Activated CD4-positive, alpha-beta memory T cell treated with anti-CD3 and anti-CD28 coated beads for 36 hours (primary cell): ENCODE measurements at regions of chr6 and their contacts with region 1.

Region 1: GRCh38 chr6:31827286-31828079 is at the start of gene HSPA1B:
- DNase-seq: peak; percentile 98
- H3K4me3 Mint-ChIP-seq: peak within 1 kb of the TSS; percentile 86
- H3K27ac Mint-ChIP-seq: peak within 1 kb of the TSS; percentile 98
- H3K4me1 Mint-ChIP-seq: peaks cover 43% of the 10 kb centered on the region
- H3K27me3 Mint-ChIP-seq: no peaks in the 10 kb centered on the region
- total RNA-seq, gene HSPA1B: 59.5 to 62.3 TPM

Region 2: GRCh38 chr6:31619805-31620585 is 207.5 kb before region 1 on chr6:
- CTCF ChIA-PET with region 1: no interaction called
- POLR2A ChIA-PET with region 1: no interaction called
- intact Hi-C with region 1: loop called (anchors 1 kb)
- DNase-seq: peak; percentile 98
- H3K4me3 Mint-ChIP-seq: peak overlapping the region; percentile 91
- H3K27ac Mint-ChIP-seq: peak overlapping the region; percentile 98
- H3K4me1 Mint-ChIP-seq: peaks cover 47% of the 10 kb centered on the region
- H3K27me3 Mint-ChIP-seq: no peaks in the 10 kb centered on the region

Region 3: GRCh38 chr6:31680840-31681671 is 146.4 kb before region 1 on chr6 and contains the start of gene LY6G5C:
- CTCF ChIA-PET with region 1: interaction called, 7 read pairs
- POLR2A ChIA-PET with region 1: no interaction called
- intact Hi-C with region 1: loop called (anchors 1 kb)
- DNase-seq: peak; percentile 82
- H3K4me3 Mint-ChIP-seq: peak within 1 kb of the TSS; percentile 76
- H3K27ac Mint-ChIP-seq: peak within 1 kb of the TSS; percentile 44
- H3K4me1 Mint-ChIP-seq: peaks cover 15% of the 10 kb centered on the region
- H3K27me3 Mint-ChIP-seq: no peaks in the 10 kb centered on the region
- total RNA-seq, gene LY6G5C: 1.4 to 1.8 TPM

Region 4: GRCh38 chr6:31752739-31753319 is 74.7 kb before region 1 on chr6:
- CTCF ChIA-PET with region 1: no interaction called
- POLR2A ChIA-PET with region 1: no interaction called
- intact Hi-C with region 1: no loop called
- DNase-seq: no peak
- H3K4me3 Mint-ChIP-seq: no peak overlapping the region
- H3K27ac Mint-ChIP-seq: no peak overlapping the region
- H3K4me1 Mint-ChIP-seq: no peaks in the 10 kb centered on the region
- H3K27me3 Mint-ChIP-seq: no peaks in the 10 kb centered on the region

Region 5: GRCh38 chr6:31769684-31770371 is 57.7 kb before region 1 on chr6:
- CTCF ChIA-PET with region 1: interaction called, 10 read pairs
- POLR2A ChIA-PET with region 1: no interaction called
- intact Hi-C with region 1: loop called (anchors 1 kb)
- DNase-seq: peak; percentile 90
- H3K4me3 Mint-ChIP-seq: no peak overlapping the region
- H3K27ac Mint-ChIP-seq: peak overlapping the region; percentile 25
- H3K4me1 Mint-ChIP-seq: peaks cover 21% of the 10 kb centered on the region
- H3K27me3 Mint-ChIP-seq: no peaks in the 10 kb centered on the region

Region 6: GRCh38 chr6:31795616-31796298 is 31.7 kb before region 1 on chr6 and contains the start of gene VARS1:
- CTCF ChIA-PET with region 1: interaction called, 9 read pairs
- POLR2A ChIA-PET with region 1: interaction called, 5 read pairs
- intact Hi-C with region 1: loop called (anchors 2 kb)
- DNase-seq: peak; percentile 91
- H3K4me3 Mint-ChIP-seq: peak within 1 kb of the TSS; percentile 98
- H3K27ac Mint-ChIP-seq: peak within 1 kb of the TSS; percentile 91
- H3K4me1 Mint-ChIP-seq: peaks cover 39% of the 10 kb centered on the region
- H3K27me3 Mint-ChIP-seq: no peaks in the 10 kb centered on the region
- total RNA-seq, gene VARS1: 141 to 153 TPM

Region 7: GRCh38 chr6:31815025-31815838 is 12.3 kb before region 1 on chr6 and contains the starts of genes HSPA1A and HSPA1L:
- CTCF ChIA-PET with region 1: interaction called, 11 read pairs
- POLR2A ChIA-PET with region 1: interaction called, 26 read pairs
- intact Hi-C with region 1: loop called (anchors 2 kb)
- DNase-seq: peak; percentile 82
- H3K4me3 Mint-ChIP-seq: peak within 1 kb of the TSS; percentile 85
- H3K27ac Mint-ChIP-seq: peak within 1 kb of the TSS; percentile 95
- H3K4me1 Mint-ChIP-seq: peaks cover 57% of the 10 kb centered on the region
- H3K27me3 Mint-ChIP-seq: no peaks in the 10 kb centered on the region
- total RNA-seq, gene HSPA1A: 68.5 to 69.9 TPM
- total RNA-seq, gene HSPA1L: 2.0 TPM

Region 8: GRCh38 chr6:31888276-31889258 is 61.1 kb after region 1 on chr6:
- CTCF ChIA-PET with region 1: no interaction called
- POLR2A ChIA-PET with region 1: no interaction called
- intact Hi-C with region 1: no loop called
- DNase-seq: no peak
- H3K4me3 Mint-ChIP-seq: no peak overlapping the region
- H3K27ac Mint-ChIP-seq: no peak overlapping the region
- H3K4me1 Mint-ChIP-seq: no peaks in the 10 kb centered on the region
- H3K27me3 Mint-ChIP-seq: no peaks in the 10 kb centered on the region